Activated CD4-positive, alpha-beta memory T cell treated with anti-CD3 and anti-CD28 coated beads for 36 hours (primary cell): ENCODE measurements at regions of chr9 and their contacts with region 1.

Region 1: DNA sequence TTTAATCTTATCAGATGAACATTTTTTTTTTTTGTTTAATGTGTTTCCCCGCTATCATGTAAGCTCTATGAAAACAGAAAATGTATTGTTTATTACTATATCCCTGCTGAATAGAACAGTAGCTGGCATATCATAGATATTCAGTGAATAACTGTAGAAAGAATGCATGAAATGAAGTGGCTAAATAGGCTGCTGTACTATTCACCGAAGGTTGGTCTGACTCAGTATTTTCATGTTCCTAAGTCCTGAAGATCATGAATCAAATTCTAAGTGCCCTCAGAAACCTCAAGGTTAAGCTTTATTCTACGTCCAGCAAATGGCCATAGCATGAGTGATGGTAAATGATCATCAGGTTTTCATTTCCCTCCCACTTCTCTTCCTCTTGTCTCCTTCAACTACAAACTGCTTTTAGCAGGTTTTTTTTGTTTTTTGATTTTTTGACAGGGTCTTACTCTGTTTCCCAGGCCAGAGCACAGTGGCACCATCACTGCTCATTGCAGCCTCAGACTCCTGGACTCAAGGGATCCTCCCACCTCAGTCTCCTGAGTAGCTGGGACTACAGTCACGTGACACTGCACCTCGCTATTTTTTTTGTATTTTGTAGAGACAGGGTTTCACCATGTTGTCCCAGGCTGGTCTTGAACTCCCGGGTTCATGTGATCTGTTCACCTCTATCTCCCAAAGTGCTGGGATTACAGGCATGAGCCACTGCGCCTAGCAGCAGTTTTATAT is 19.1 kb upstream of the ZFAND5 start:
- DNase-seq: no peak
- H3K4me3 Mint-ChIP-seq: no peak overlapping the region
- H3K27ac Mint-ChIP-seq: no peak overlapping the region
- H3K4me1 Mint-ChIP-seq: peaks cover 7% of the 10 kb centered on the region
- H3K27me3 Mint-ChIP-seq: no peaks in the 10 kb centered on the region

Region 2: DNA sequence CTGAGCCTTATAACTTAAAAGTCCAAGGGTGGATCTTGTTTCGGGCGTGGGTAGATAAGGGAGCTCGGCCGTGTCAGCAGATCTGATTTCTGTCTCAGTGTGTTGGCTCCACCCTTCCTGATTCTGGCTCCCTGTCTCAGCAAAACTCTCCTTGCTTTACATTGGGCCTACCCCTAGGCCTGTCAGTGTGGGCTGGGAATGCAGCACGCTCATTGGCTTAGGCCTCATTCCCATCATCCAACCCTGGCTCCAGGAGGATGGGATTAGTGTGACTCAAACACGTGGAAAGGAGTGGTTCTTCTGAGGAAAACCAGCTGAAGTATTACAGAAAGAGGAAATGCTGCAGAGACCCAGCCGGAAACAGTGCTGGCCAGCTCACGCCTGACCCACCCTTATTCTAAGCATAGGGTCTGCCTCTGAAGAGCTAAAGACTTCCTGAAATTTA is 79.0 kb before region 1 on chr9:
- CTCF ChIA-PET with region 1: no interaction called
- POLR2A ChIA-PET with region 1: no interaction called
- intact Hi-C with region 1: no loop called
- DNase-seq: peak; percentile 36
- H3K4me3 Mint-ChIP-seq: no peak overlapping the region
- H3K27ac Mint-ChIP-seq: no peak overlapping the region
- H3K4me1 Mint-ChIP-seq: peaks cover 28% of the 10 kb centered on the region
- H3K27me3 Mint-ChIP-seq: no peaks in the 10 kb centered on the region

Region 3: DNA sequence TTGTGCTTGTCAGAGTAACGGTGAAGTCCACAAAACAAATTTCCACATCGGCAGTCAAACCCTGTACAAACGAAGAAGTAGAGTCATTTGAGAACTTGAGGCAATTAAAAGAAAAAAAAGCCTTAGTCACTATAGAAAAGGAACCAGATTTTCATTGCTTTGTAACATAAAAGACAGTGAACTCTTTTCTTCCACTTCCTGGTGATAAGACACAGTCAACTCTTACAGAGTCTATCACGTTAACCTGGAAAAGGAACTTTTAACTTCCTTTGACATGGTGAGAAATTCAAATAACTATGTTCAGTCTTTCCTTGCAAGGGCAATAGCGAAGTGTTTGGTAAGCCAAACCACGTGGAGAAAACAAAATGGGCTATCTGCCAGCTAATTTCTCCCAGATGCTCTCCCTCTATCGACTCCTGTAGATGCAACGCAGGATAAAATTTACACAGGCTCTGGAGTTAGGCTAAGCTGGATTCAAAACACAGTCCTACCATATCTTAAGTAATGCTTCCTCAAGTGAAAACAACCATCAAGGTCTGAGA is 28.0 kb before region 1 on chr9:
- CTCF ChIA-PET with region 1: no interaction called
- POLR2A ChIA-PET with region 1: no interaction called
- intact Hi-C with region 1: loop called (anchors 5 kb)
- DNase-seq: no peak
- H3K4me3 Mint-ChIP-seq: no peak overlapping the region
- H3K27ac Mint-ChIP-seq: peak overlapping the region; percentile 70
- H3K4me1 Mint-ChIP-seq: peaks cover 55% of the 10 kb centered on the region
- H3K27me3 Mint-ChIP-seq: no peaks in the 10 kb centered on the region

Region 4: GRCh38 chr9:72443855-72444254 is 59.7 kb after region 1 on chr9:
- CTCF ChIA-PET with region 1: no interaction called
- POLR2A ChIA-PET with region 1: no interaction called
- intact Hi-C with region 1: loop called (anchors 1 kb)
- DNase-seq: peak; percentile 28
- H3K4me3 Mint-ChIP-seq: peak overlapping the region; percentile 25
- H3K27ac Mint-ChIP-seq: peak overlapping the region; percentile 83
- H3K4me1 Mint-ChIP-seq: peaks cover 28% of the 10 kb centered on the region
- H3K27me3 Mint-ChIP-seq: no peaks in the 10 kb centered on the region